Heart right ventricle (tissue), 16 donors: ENCODE measurements at regions of chr9 and their contacts with region 1.

Region 1: DNA sequence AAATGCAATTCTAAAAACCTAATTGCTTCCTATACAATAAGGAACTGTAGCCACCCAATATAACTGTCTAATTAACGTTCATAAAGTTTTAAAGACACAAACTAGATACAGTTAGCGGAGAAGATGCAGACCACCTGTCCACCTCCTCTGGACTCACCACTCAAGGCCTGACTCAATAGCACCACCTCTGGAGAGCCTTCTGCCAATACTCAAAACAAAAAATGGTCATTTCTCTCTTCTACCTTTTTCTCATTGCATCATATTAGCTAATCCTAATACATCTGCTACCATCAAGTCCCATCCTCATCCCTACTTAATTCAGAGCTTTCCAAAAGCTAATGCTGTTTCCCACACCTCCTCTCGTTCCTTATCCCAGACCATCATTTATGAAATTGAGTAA is 159.9 kb downstream of the MLLT3 start:
- DNase-seq: no peak
- ATAC-seq: no peak
- H3K4me3 ChIP-seq: no peak overlapping the region
- H3K27ac ChIP-seq: no peak overlapping the region
- H3K4me1 ChIP-seq: peaks cover 0 to 17% (median 3%) of the 10 kb centered on the region in 9 donors
- H3K27me3 ChIP-seq: no peaks in the 10 kb centered on the region
- CTCF ChIP-seq: no peak

Region 2: DNA sequence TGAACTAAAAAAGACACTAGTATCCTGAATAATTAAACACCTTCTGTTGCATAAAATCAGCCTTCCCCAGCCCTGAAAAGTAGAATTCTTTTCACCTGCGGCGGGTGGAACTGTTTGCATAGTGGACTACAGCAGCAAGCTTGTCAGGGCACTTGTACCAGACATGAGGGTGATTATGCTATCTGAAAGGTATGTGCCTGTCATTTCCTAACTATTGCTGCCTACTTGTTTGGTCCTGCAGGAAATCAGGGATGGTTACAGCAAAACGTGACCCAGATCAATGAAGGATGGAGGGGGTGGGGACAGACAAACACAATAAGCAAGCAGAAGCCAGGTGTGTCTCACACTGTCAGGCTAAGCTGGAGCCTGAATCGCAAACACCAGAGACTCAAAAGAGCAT is 225.7 kb before region 1 on chr9:
- intact Hi-C with region 1: no loop called
- DNase-seq: no peak
- ATAC-seq: no peak
- H3K4me3 ChIP-seq: no peak overlapping the region
- H3K27ac ChIP-seq: no peak overlapping the region
- H3K4me1 ChIP-seq: no peaks in the 10 kb centered on the region
- H3K27me3 ChIP-seq: no peaks in the 10 kb centered on the region
- CTCF ChIP-seq: no peak

Region 3: GRCh38 chr9:20397348-20397747 is 65.1 kb before region 1 on chr9:
- intact Hi-C with region 1: loop called in 2 of 10 experiments (anchors 10 kb)
- DNase-seq: no peak
- ATAC-seq: no peak
- H3K4me3 ChIP-seq: no peak overlapping the region
- H3K27ac ChIP-seq: no peak overlapping the region
- H3K4me1 ChIP-seq: peaks cover 0 to 12% (median 0%) of the 10 kb centered on the region in 9 donors
- H3K27me3 ChIP-seq: no peaks in the 10 kb centered on the region
- CTCF ChIP-seq: no peak

Region 4: GRCh38 chr9:20407012-20407411 is 55.4 kb before region 1 on chr9:
- intact Hi-C with region 1: loop called in 1 of 10 experiments (anchors 10 kb)
- DNase-seq: no peak
- ATAC-seq: no peak
- H3K4me3 ChIP-seq: no peak overlapping the region
- H3K27ac ChIP-seq: no peak overlapping the region
- H3K4me1 ChIP-seq: peaks cover 0 to 4% (median 0%) of the 10 kb centered on the region in 9 donors
- H3K27me3 ChIP-seq: no peaks in the 10 kb centered on the region
- CTCF ChIP-seq: peak in 2 of 9 donors; percentile 14

Region 5: DNA sequence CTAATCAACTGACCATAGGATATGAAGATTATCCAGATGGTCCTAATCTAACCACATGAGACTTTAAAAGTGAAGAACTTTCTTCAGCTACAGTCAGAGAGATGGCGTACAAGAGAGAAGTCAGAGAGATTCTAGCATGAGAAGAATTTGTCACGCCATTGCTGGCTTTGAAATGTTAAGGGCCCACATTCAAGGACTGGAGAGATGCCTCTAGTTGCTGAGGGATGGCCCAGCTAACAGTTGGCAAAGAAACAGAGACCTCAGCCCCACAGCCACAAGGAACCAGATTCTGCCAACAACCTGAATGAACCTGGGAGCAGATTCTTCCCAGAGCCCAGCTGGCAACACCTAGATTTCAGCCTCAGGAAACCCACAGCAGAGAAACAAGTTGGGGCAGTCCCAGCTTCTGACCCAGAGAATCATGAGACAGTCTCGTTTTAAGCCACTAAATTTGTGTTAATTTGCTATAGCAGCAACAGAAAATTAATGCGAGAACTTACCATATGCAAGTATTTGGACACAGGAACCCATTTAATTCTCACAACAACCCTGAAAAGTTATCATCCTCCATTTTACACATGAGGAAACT is 27.9 kb after region 1 on chr9:
- intact Hi-C with region 1: loop called in 1 of 10 experiments (anchors 2 kb)
- DNase-seq: no peak
- ATAC-seq: no peak
- H3K4me3 ChIP-seq: no peak overlapping the region
- H3K27ac ChIP-seq: no peak overlapping the region
- H3K4me1 ChIP-seq: peaks cover 0 to 31% (median 9%) of the 10 kb centered on the region in 9 donors
- H3K27me3 ChIP-seq: no peaks in the 10 kb centered on the region
- CTCF ChIP-seq: no peak

Region 6: DNA sequence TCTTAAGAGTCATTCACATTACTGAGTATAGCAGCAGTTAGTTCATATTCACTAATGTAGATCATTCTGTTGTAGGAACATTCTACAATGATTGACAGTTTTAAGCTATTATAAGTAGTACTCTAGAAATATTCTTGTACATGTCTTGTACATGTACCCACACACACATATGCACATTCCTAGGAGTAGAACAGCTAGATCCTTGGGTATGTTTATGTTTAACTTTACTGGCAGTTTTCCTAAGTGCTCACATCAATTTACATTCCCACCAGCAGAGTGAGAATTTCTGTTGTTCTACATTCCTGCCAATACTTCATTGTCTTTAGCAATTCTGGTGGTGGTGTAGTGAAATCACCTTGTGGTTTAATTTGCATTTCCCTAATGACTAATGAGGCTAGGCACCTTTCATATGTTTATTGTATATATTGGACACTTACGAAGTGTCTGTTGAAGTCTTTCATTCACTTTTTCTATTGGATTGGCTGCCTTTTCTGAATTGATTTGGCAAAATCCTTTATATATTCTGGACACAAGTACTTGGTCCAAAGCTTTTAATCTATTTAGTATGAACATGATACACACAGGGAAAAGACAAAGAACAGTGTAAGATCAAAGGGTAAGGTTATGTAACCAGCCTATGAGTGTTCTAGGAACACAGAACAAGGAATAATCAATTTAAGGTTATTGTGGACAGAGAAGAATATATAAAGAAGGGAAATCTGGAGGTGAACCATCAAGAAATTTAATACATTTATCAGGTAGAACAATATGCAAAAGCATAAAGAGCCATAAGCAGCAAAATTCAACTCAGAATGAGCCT is 64.3 kb after region 1 on chr9:
- intact Hi-C with region 1: loop called in 1 of 10 experiments (anchors 10 kb)
- DNase-seq: no peak
- ATAC-seq: no peak
- H3K4me3 ChIP-seq: no peak overlapping the region
- H3K27ac ChIP-seq: no peak overlapping the region
- H3K4me1 ChIP-seq: peaks cover 0 to 10% (median 0%) of the 10 kb centered on the region in 9 donors
- H3K27me3 ChIP-seq: no peaks in the 10 kb centered on the region
- CTCF ChIP-seq: no peak